ENCODE measurements at regions of chr2 and their contacts with region 1.

Region 1: DNA sequence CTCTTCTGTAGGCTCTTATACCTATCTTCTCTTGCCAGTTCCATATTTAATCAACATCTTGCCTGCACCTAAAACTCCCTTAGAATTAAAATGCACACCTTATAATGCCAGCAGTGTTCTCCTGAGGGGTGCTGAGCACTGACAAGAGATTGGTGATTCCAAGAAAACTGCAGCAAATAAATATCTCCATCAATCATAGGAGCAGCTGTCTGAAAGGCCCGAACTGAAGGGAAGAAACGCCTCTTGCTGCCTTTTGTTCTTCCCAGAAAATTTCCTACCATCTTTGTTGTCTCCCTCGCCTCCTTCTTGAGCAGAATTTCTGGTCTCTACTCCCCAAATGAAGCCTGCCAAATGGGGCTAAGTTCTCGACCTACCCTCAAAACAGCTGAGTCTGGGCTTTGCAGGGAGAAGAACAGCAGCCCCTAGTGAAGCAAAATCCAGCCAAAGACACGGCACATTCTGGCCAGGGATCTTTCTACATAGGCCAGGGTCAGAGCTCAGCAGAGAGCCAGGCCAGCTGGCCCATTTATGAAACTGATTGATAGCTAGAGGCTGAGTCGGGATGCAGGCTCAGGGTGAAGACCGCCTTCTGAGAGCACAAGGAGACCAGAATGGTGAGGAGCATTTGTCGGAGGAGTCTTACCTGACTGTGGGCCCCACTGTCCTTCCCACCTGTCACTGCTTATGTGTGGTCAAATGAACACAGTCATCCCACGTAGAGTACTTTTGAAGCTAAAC is 20.4 kb upstream of the TMEM247 start:
- DNase-seq: no peak
- ATAC-seq: no peak
- H3K4me3 ChIP-seq: no peak overlapping the region
- H3K27ac ChIP-seq: no peak overlapping the region
- H3K4me1 ChIP-seq: peaks cover 18% of the 10 kb centered on the region
- H3K27me3 ChIP-seq: no peaks in the 10 kb centered on the region
- CTCF ChIP-seq: no peak
- POLR2A ChIP-seq: no peak

Region 2: GRCh38 chr2:46010925-46011490 is 447.9 kb before region 1 on chr2:
- intact Hi-C with region 1: loop called (anchors 5 kb)
- DNase-seq: no peak
- ATAC-seq: no peak
- H3K4me3 ChIP-seq: no peak overlapping the region
- H3K27ac ChIP-seq: no peak overlapping the region
- H3K4me1 ChIP-seq: no peaks in the 10 kb centered on the region
- H3K27me3 ChIP-seq: no peaks in the 10 kb centered on the region
- CTCF ChIP-seq: peak; percentile 47 to 77 (median 69)
- POLR2A ChIP-seq: no peak

Region 3: GRCh38 chr2:46749042-46749531 is 290.2 kb after region 1 on chr2:
- intact Hi-C with region 1: no loop called
- DNase-seq: peak in 1 of 4 donors; percentile 13
- ATAC-seq: peak; percentile 85
- H3K4me3 ChIP-seq: no peak overlapping the region
- H3K27ac ChIP-seq: peak overlapping the region in 2 of 4 donors; percentile 50 to 55
- H3K4me1 ChIP-seq: peaks cover 43% of the 10 kb centered on the region
- H3K27me3 ChIP-seq: no peaks in the 10 kb centered on the region
- CTCF ChIP-seq: no peak
- POLR2A ChIP-seq: no peak